CD8-positive, alpha-beta T cell (primary cell): ENCODE measurements at regions of chr10 and their contacts with region 1.

Region 1: GRCh38 chr10:68526626-68527307 is 556 bp downstream of the SLC25A16 start:
- DNase-seq: no peak
- ATAC-seq: no peak
- H3K4me3 ChIP-seq: peak overlapping the region; percentile 74 to 96
- H3K4me3 Mint-ChIP-seq: peak overlapping the region; percentile 92
- H3K27ac ChIP-seq: peak overlapping the region; percentile 91
- H3K27ac Mint-ChIP-seq: peak overlapping the region; percentile 96
- H3K4me1 ChIP-seq: peaks cover 6% of the 10 kb centered on the region
- H3K4me1 Mint-ChIP-seq: peaks cover 8% of the 10 kb centered on the region
- H3K27me3 ChIP-seq: no peaks in the 10 kb centered on the region
- H3K27me3 Mint-ChIP-seq: no peaks in the 10 kb centered on the region
- CTCF ChIP-seq: no peak

Region 2: GRCh38 chr10:67884313-67884841 is 642.4 kb before region 1 on chr10 and contains the start of gene SIRT1:
- CTCF ChIA-PET with region 1: no interaction called
- POLR2A ChIA-PET with region 1: no interaction called
- intact Hi-C with region 1: loop called (anchors 5 to 10 kb)
- DNase-seq: peak; percentile 84 to 97 (median 94)
- ATAC-seq: peak; percentile 72
- H3K4me3 ChIP-seq: peak within 1 kb of the TSS; percentile 69 to 70
- H3K4me3 Mint-ChIP-seq: peak within 1 kb of the TSS; percentile 89
- H3K27ac ChIP-seq: peak within 1 kb of the TSS; percentile 57 to 89
- H3K27ac Mint-ChIP-seq: peak within 1 kb of the TSS; percentile 94
- H3K4me1 ChIP-seq: peaks cover 23% of the 10 kb centered on the region
- H3K4me1 Mint-ChIP-seq: peaks cover 35% of the 10 kb centered on the region
- H3K27me3 ChIP-seq: no peaks in the 10 kb centered on the region
- H3K27me3 Mint-ChIP-seq: no peaks in the 10 kb centered on the region
- CTCF ChIP-seq: no peak
- total RNA-seq, gene SIRT1: 72.6 to 74.5 TPM

Region 3: GRCh38 chr10:68406815-68407548 is 119.8 kb before region 1 on chr10 and contains the start of gene RUFY2:
- CTCF ChIA-PET with region 1: no interaction called
- POLR2A ChIA-PET with region 1: no interaction called
- intact Hi-C with region 1: loop called (anchors 1 to 2 kb)
- DNase-seq: peak; percentile 56 to 89 (median 76)
- ATAC-seq: peak; percentile 92
- H3K4me3 ChIP-seq: peak within 1 kb of the TSS; percentile 95 to 99
- H3K4me3 Mint-ChIP-seq: peak within 1 kb of the TSS; percentile 92
- H3K27ac ChIP-seq: peak within 1 kb of the TSS; percentile 69 to 78
- H3K27ac Mint-ChIP-seq: peak within 1 kb of the TSS; percentile 82
- H3K4me1 ChIP-seq: peaks cover 10% of the 10 kb centered on the region
- H3K4me1 Mint-ChIP-seq: peaks cover 19% of the 10 kb centered on the region
- H3K27me3 ChIP-seq: no peaks in the 10 kb centered on the region
- H3K27me3 Mint-ChIP-seq: no peaks in the 10 kb centered on the region
- CTCF ChIP-seq: peak; percentile 81
- total RNA-seq, gene RUFY2: 11.7 to 13.7 TPM

Region 4: DNA sequence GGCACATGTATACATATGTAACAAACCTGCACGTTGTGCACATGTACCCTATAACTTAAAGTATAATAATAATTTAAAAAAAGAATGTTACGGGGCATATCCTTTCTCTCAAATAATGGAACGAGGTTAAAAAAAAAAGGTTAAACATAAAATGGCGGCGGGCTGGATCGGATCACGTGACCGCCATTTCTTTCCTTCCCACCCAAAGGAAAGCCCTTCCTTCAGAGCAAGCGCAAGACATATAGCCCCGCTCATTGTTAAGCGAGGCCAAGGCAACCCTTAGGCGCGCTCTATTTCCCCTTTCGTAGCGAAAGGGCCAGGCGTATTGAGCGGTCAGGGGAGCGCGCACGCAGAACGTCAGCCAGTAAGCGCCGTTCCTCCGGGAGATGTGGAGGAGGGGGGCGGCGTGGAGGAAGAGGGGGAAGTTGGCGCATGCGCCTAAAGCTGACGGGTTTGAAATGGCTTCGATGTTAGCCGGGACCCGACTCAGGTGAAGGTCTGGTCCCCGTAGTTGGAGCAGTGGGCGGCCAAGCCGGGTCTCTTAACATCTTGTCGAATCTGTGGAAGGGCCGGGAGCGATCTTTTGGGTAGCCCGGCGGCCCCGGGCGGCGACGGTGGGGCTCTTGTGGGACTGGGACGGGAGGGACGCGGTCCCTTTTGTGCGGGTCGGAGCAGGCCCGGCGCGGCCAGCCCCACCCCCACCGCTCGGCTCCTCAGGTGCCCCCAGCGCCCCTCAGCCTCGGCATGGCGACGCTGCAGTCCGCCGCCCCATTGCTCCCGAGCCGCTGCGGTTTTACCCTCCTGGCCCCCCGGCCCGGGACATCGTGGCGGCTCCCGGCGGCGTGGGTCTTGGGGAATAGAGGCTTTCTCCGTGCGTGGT is 194.3 kb after region 1 on chr10 and contains the start of gene CCAR1:
- CTCF ChIA-PET with region 1: no interaction called
- POLR2A ChIA-PET with region 1: no interaction called
- intact Hi-C with region 1: loop called (anchors 1 to 5 kb)
- DNase-seq: peak; percentile 92 to 99 (median 97)
- ATAC-seq: peak; percentile 95
- H3K4me3 ChIP-seq: peak within 1 kb of the TSS; percentile 87 to 98
- H3K4me3 Mint-ChIP-seq: peak within 1 kb of the TSS; percentile 100
- H3K27ac ChIP-seq: peak within 1 kb of the TSS; percentile 83 to 95
- H3K27ac Mint-ChIP-seq: peak within 1 kb of the TSS; percentile 99
- H3K4me1 ChIP-seq: peaks cover 10% of the 10 kb centered on the region
- H3K4me1 Mint-ChIP-seq: peaks cover 20% of the 10 kb centered on the region
- H3K27me3 ChIP-seq: no peaks in the 10 kb centered on the region
- H3K27me3 Mint-ChIP-seq: no peaks in the 10 kb centered on the region
- CTCF ChIP-seq: no peak
- total RNA-seq, gene CCAR1: 70.8 to 79.1 TPM